Left cardiac atrium (tissue), 4 donors: ENCODE measurements at regions of chr20 and their contacts with region 1.

Region 1: DNA sequence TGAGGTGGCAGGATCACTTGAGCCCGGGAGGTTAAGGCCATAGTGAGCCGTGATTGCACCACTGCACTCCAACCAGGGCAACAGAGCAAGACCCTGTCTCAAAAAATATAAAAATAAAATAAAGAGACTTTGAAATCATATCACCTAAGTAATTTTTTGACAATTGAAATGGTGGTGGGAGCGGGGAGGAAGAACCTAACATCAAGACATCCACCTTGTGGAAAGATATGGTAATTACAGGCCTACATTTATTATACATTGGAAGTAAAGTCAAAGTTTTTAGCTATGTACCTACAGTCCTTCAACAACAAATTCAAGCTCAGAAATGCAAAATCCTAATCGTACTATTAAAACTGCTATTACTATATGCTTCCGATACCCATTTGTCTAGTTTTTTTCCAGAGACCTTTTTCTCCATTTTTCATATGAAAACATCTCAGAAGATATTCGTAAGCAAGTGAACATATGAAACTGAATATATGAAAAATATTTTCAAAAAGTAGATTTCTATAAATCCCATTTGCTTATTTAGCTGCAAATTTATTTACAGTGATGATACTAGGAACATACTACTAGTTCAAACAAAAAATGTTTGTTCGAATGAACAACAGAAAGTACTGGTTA is 83.3 kb downstream of the SYCP2 start:
- DNase-seq: no peak
- ATAC-seq: no peak

Region 2: DNA sequence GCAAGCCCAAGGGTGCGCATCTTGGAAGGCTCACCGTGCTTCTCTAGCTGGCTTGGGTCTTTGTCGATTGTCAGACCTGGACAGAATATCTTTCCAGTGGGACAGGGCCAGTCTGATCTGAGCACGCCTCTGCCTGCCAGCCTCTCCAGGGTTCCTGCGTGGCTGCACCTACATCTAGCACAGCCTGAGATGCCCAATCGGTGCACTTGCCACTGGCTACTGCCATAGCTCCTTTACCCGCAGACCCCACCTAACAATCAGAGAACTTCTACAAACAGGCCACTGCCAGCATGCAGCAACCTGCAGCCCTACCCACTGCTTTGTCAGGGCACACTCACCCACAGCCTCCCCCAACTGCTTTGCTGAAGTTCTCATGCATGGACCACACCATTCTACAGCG is 302.5 kb before region 1 on chr20:
- intact Hi-C with region 1: no loop called
- DNase-seq: no peak
- ATAC-seq: no peak

Region 3: GRCh38 chr20:59598625-59599310 is 251.4 kb before region 1 on chr20:
- intact Hi-C with region 1: loop called in 1 of 2 experiments (anchors 10 kb)
- DNase-seq: no peak
- ATAC-seq: peak in 1 of 2 donors; percentile 60

Region 4: GRCh38 chr20:59782986-59783640 is 67.0 kb before region 1 on chr20:
- intact Hi-C with region 1: loop called (anchors 1 to 5 kb)
- DNase-seq: peak; percentile 54
- ATAC-seq: peak; percentile 36 to 63